CD4-positive, alpha-beta T cell (primary cell): ENCODE measurements at regions of chr17 and their contacts with region 1.

Region 1: GRCh38 chr17:48791128-48792032 is 25.6 kb downstream of the TTLL6 start:
- DNase-seq: peak in 5 of 14 experiments; percentile 4 to 54 (median 37)
- ATAC-seq: no peak
- H3K4me3 ChIP-seq: no peak overlapping the region
- H3K4me3 Mint-ChIP-seq: no peak overlapping the region
- H3K27ac ChIP-seq: no peak overlapping the region
- H3K27ac Mint-ChIP-seq: no peak overlapping the region
- H3K4me1 ChIP-seq: peaks cover 6% of the 10 kb centered on the region
- H3K4me1 Mint-ChIP-seq: no peaks in the 10 kb centered on the region
- H3K27me3 ChIP-seq: peaks cover 13 to 21% of the 10 kb centered on the region in 2 experiments
- H3K27me3 Mint-ChIP-seq: peaks cover 72% of the 10 kb centered on the region
- CTCF ChIP-seq: no peak

Region 2: DNA sequence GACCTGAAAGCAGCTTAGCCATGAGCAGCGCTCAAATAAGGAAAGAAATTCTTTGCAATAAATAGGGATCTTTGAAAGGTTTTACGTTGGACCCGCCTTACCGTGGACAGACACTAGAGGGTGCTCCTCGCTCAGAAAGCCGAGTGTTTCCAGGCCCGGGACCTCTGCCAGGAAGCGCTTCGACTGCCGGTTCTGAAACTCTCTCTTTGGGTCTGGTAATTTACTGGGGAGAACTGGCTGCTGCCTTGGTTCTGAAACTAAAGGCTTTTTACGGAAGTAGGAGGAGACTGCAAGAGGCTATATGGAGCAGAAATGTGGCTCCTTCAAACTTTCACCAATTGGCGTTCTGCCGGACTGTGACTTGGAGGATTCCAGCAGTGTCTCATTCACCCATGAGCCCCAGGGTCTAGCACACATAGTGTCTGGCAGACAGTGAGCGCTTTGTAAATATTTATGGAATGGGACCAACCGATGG is 119.6 kb before region 1 on chr17:
- CTCF ChIA-PET with region 1: no interaction called
- POLR2A ChIA-PET with region 1: no interaction called
- intact Hi-C with region 1: loop called in 1 of 2 experiments (anchors 2 kb)
- DNase-seq: peak; percentile 59 to 83 (median 65)
- ATAC-seq: peak; percentile 95
- H3K4me3 ChIP-seq: no peak overlapping the region
- H3K4me3 Mint-ChIP-seq: peak overlapping the region; percentile 3
- H3K27ac ChIP-seq: no peak overlapping the region
- H3K27ac Mint-ChIP-seq: no peak overlapping the region
- H3K4me1 ChIP-seq: peaks cover 7% of the 10 kb centered on the region
- H3K4me1 Mint-ChIP-seq: peaks cover 5% of the 10 kb centered on the region
- H3K27me3 ChIP-seq: peaks cover 9 to 13% of the 10 kb centered on the region in 2 experiments
- H3K27me3 Mint-ChIP-seq: peaks cover 73% of the 10 kb centered on the region
- CTCF ChIP-seq: peak; percentile 85